CD8-positive, alpha-beta T cell (primary cell): ENCODE measurements at regions of chr2 and their contacts with region 1.

Region 1: GRCh38 chr2:70301344-70302194 is at the start of gene FAM136A:
- DNase-seq: peak; percentile 78 to 93 (median 88)
- ATAC-seq: peak; percentile 93
- H3K4me3 ChIP-seq: peak within 1 kb of the TSS; percentile 85 to 94
- H3K4me3 Mint-ChIP-seq: peak within 1 kb of the TSS; percentile 89
- H3K27ac ChIP-seq: peak within 1 kb of the TSS; percentile 77 to 80
- H3K27ac Mint-ChIP-seq: peak within 1 kb of the TSS; percentile 93
- H3K4me1 ChIP-seq: peaks cover 16% of the 10 kb centered on the region
- H3K4me1 Mint-ChIP-seq: peaks cover 29% of the 10 kb centered on the region
- H3K27me3 ChIP-seq: no peaks in the 10 kb centered on the region
- H3K27me3 Mint-ChIP-seq: no peaks in the 10 kb centered on the region
- CTCF ChIP-seq: peak; percentile 87
- total RNA-seq, gene FAM136A: 30.8 to 30.9 TPM

Region 2: DNA sequence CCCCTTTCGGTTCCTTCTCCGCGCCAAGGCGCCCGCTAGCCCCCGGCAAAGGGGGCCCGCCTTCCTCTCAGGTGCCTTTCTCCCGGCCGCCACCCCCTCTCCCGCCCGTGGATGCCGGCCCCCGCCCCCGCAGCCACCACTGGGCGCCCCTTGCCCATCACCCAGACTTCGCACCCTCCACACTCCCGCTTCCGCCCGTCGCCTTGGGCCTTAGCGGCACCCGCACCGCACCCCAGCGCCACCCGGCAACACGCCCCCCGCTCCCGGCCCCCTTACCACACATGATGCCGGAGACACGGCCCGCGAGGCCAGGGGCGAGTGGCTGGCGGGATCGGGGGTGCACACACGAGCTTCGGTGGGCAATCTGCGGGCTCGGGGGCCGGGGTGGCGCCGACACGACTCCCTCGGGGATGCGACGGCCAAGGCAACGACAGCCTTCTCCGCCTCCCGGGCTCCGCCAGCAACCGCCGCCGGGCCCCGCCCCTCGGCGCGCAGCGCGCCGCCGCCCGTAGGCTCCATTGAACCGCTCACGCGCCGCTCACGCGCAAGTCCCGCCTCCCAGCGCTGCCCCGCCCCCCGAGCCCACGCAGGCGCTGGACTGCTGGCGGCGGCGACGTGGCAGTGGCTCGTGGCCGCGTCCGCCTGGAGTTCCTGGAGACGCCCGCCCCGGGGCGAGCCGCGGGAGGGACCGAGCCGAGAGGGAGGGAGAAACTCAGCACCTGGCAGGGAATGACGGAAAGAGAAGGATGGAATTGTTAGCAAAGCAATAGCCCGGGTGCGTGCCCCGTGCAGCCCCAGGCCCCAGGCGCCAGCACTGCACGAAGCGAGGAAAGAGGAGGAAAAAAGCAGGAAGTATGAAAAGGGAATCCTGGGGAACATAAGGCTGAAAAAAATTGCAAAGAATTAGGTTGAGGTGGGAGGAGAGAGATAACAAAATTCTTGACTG is 914.5 kb before region 1 on chr2 and contains the start of gene GFPT1:
- CTCF ChIA-PET with region 1: no interaction called
- POLR2A ChIA-PET with region 1: no interaction called
- intact Hi-C with region 1: loop called in 1 of 2 experiments (anchors 5 kb)
- DNase-seq: peak; percentile 84 to 97 (median 93)
- ATAC-seq: peak; percentile 98
- H3K4me3 ChIP-seq: peak within 1 kb of the TSS; percentile 64 to 68
- H3K4me3 Mint-ChIP-seq: peak within 1 kb of the TSS; percentile 88
- H3K27ac ChIP-seq: peak within 1 kb of the TSS; percentile 65 to 70
- H3K27ac Mint-ChIP-seq: peak within 1 kb of the TSS; percentile 84
- H3K4me1 ChIP-seq: peaks cover 17% of the 10 kb centered on the region
- H3K4me1 Mint-ChIP-seq: peaks cover 45% of the 10 kb centered on the region
- H3K27me3 ChIP-seq: no peaks in the 10 kb centered on the region
- H3K27me3 Mint-ChIP-seq: no peaks in the 10 kb centered on the region
- CTCF ChIP-seq: no peak
- total RNA-seq, gene GFPT1: 26.5 to 30.9 TPM

Region 3: DNA sequence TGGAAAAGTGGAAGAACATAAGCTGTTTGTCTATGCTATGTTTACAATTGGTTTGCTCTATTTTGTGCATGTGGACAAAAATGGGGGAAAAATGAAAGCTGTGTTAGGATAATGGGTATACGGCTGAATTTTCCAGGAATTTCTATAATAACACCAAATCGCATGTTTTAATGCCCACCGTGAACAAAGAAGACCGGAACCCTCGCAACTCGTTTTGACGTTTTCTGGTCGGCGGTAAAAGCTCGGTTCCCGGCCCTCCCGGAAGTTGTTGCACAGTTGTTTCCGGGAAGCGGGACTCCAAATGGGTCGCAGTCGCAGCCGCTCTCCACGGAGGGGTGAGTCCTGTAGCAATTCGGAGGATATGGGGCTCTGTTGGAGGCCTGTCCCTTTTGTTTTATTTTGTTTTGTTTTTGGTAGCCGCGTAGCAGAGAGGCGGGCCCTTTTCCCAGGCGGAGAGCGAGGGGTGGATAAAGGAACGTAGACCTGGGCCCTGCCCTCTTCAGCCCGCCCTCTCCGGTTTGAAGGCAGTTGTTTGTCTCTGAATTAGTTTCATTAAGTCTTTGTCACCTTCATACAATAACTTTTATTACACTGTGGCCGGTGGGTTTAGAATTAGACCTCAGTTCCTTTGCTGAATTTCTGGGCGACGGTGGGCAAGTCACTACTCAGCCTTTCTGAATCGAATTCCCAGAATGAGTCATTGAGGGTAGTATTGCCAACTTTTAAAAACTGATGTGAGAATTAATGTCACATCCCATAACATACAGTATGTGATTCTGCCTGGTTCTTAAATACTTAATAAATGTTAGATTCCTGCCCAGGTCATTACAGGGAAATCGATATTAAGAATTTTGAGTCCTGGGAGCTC is 407.7 kb before region 1 on chr2 and contains the start of gene SNRNP27:
- CTCF ChIA-PET with region 1: interaction called, 5 read pairs
- POLR2A ChIA-PET with region 1: no interaction called
- intact Hi-C with region 1: loop called in 1 of 2 experiments (anchors 5 kb)
- DNase-seq: peak; percentile 71 to 89 (median 83)
- ATAC-seq: peak; percentile 92
- H3K4me3 ChIP-seq: peak within 1 kb of the TSS; percentile 85 to 88
- H3K4me3 Mint-ChIP-seq: peak within 1 kb of the TSS; percentile 99
- H3K27ac ChIP-seq: peak within 1 kb of the TSS; percentile 82 to 86
- H3K27ac Mint-ChIP-seq: peak within 1 kb of the TSS; percentile 99
- H3K4me1 ChIP-seq: peaks cover 13% of the 10 kb centered on the region
- H3K4me1 Mint-ChIP-seq: peaks cover 46% of the 10 kb centered on the region
- H3K27me3 ChIP-seq: no peaks in the 10 kb centered on the region
- H3K27me3 Mint-ChIP-seq: no peaks in the 10 kb centered on the region
- CTCF ChIP-seq: no peak
- total RNA-seq, gene SNRNP27: 47.9 to 58.5 TPM

Region 4: GRCh38 chr2:70024284-70024994 is 277.1 kb before region 1 on chr2:
- CTCF ChIA-PET with region 1: no interaction called
- POLR2A ChIA-PET with region 1: no interaction called
- intact Hi-C with region 1: no loop called
- DNase-seq: peak in 1 of 9 experiments; percentile 15
- ATAC-seq: no peak
- H3K4me3 ChIP-seq: no peak overlapping the region
- H3K4me3 Mint-ChIP-seq: no peak overlapping the region
- H3K27ac ChIP-seq: no peak overlapping the region
- H3K27ac Mint-ChIP-seq: no peak overlapping the region
- H3K4me1 ChIP-seq: no peaks in the 10 kb centered on the region
- H3K4me1 Mint-ChIP-seq: no peaks in the 10 kb centered on the region
- H3K27me3 ChIP-seq: no peaks in the 10 kb centered on the region
- H3K27me3 Mint-ChIP-seq: no peaks in the 10 kb centered on the region
- CTCF ChIP-seq: no peak

Region 5: DNA sequence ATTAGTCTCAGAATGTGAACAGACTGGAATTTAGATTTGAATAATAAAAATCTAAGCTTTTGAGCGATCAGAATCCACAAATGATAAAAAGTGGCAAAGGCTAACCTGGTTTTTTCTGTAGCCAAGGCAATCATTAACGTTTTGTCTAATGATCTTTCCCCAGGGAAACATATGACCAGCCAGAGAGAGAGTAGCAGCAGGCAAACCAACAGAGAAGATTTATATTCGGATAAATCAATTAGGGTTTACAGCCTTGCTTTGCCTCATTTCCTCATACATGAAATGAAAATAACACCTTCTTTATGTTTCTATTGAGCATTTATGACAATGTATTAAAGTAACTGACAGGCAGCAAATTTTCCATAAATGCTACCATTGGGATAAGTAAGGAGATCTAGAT is 67.6 kb before region 1 on chr2:
- CTCF ChIA-PET with region 1: no interaction called
- POLR2A ChIA-PET with region 1: no interaction called
- intact Hi-C with region 1: no loop called
- DNase-seq: no peak
- ATAC-seq: no peak
- H3K4me3 ChIP-seq: no peak overlapping the region
- H3K4me3 Mint-ChIP-seq: no peak overlapping the region
- H3K27ac ChIP-seq: no peak overlapping the region
- H3K27ac Mint-ChIP-seq: no peak overlapping the region
- H3K4me1 ChIP-seq: no peaks in the 10 kb centered on the region
- H3K4me1 Mint-ChIP-seq: peaks cover 3% of the 10 kb centered on the region
- H3K27me3 ChIP-seq: no peaks in the 10 kb centered on the region
- H3K27me3 Mint-ChIP-seq: no peaks in the 10 kb centered on the region
- CTCF ChIP-seq: no peak

Region 6: GRCh38 chr2:70248181-70248847 is 53.3 kb before region 1 on chr2 and contains the start of gene TIA1:
- CTCF ChIA-PET with region 1: interaction called, 5 read pairs
- POLR2A ChIA-PET with region 1: no interaction called
- intact Hi-C with region 1: loop called in 1 of 2 experiments (anchors 1 kb)
- DNase-seq: peak; percentile 96 to 100 (median 98)
- ATAC-seq: peak; percentile 98
- H3K4me3 ChIP-seq: peak within 1 kb of the TSS; percentile 86 to 90
- H3K4me3 Mint-ChIP-seq: peak within 1 kb of the TSS; percentile 97
- H3K27ac ChIP-seq: peak within 1 kb of the TSS; percentile 86 to 92
- H3K27ac Mint-ChIP-seq: peak within 1 kb of the TSS; percentile 98
- H3K4me1 ChIP-seq: peaks cover 30% of the 10 kb centered on the region
- H3K4me1 Mint-ChIP-seq: peaks cover 37% of the 10 kb centered on the region
- H3K27me3 ChIP-seq: no peaks in the 10 kb centered on the region
- H3K27me3 Mint-ChIP-seq: no peaks in the 10 kb centered on the region
- CTCF ChIP-seq: no peak
- total RNA-seq, gene TIA1: 55.9 to 62.6 TPM

Region 7: DNA sequence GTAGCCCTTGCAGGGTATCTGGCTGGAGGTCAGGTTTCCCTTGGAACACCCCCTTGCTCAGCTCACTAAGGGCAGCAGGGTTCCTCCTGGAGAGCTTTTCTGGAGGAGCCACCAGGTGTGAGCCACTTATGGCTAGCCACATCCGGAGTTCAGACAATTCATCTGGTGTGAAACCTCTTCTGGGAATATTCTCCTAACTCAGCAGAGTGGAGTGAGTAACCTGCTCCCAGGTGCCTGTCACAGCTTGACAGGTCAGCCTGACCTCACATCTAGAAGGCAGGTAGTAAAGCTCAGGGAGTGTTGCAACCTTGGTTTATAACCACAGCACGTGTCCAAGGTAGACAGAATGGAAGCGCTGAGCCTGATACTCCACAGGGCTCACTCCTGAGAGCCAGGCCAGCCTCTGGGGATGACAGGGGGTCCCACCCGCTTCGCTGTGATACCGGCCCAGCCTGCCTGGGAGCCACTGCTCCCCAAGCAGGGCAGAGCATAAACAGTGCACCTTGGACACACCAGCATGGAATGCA is 314.7 kb after region 1 on chr2:
- CTCF ChIA-PET with region 1: interaction called, 116 read pairs
- POLR2A ChIA-PET with region 1: no interaction called
- intact Hi-C with region 1: loop called in 1 of 2 experiments (anchors 1 kb)
- DNase-seq: no peak
- ATAC-seq: no peak
- H3K4me3 ChIP-seq: no peak overlapping the region
- H3K4me3 Mint-ChIP-seq: no peak overlapping the region
- H3K27ac ChIP-seq: no peak overlapping the region
- H3K27ac Mint-ChIP-seq: no peak overlapping the region
- H3K4me1 ChIP-seq: no peaks in the 10 kb centered on the region
- H3K4me1 Mint-ChIP-seq: no peaks in the 10 kb centered on the region
- H3K27me3 ChIP-seq: no peaks in the 10 kb centered on the region
- H3K27me3 Mint-ChIP-seq: peaks cover 6% of the 10 kb centered on the region
- CTCF ChIP-seq: no peak

Region 8: GRCh38 chr2:70789304-70790135 is 488.0 kb after region 1 on chr2:
- CTCF ChIA-PET with region 1: no interaction called
- POLR2A ChIA-PET with region 1: no interaction called
- intact Hi-C with region 1: loop called (anchors 5 to 10 kb)
- DNase-seq: peak; percentile 30 to 78 (median 67)
- ATAC-seq: peak; percentile 73
- H3K4me3 ChIP-seq: peak overlapping the region; percentile 32 to 36
- H3K4me3 Mint-ChIP-seq: peak overlapping the region; percentile 82
- H3K27ac ChIP-seq: no peak overlapping the region
- H3K27ac Mint-ChIP-seq: no peak overlapping the region
- H3K4me1 ChIP-seq: peaks cover 8% of the 10 kb centered on the region
- H3K4me1 Mint-ChIP-seq: peaks cover 13% of the 10 kb centered on the region
- H3K27me3 ChIP-seq: peaks cover 7 to 11% of the 10 kb centered on the region in 2 experiments
- H3K27me3 Mint-ChIP-seq: peaks cover 51% of the 10 kb centered on the region
- CTCF ChIP-seq: peak; percentile 54

Region 9: GRCh38 chr2:70994756-70995729 is 693.5 kb after region 1 on chr2 and contains the start of gene TEX261:
- CTCF ChIA-PET with region 1: no interaction called
- POLR2A ChIA-PET with region 1: no interaction called
- intact Hi-C with region 1: loop called in 1 of 2 experiments (anchors 5 kb)
- DNase-seq: peak; percentile 82 to 94 (median 89)
- ATAC-seq: peak; percentile 95
- H3K4me3 ChIP-seq: peak within 1 kb of the TSS; percentile 82 to 95
- H3K4me3 Mint-ChIP-seq: peak within 1 kb of the TSS; percentile 97
- H3K27ac ChIP-seq: peak within 1 kb of the TSS; percentile 69 to 74
- H3K27ac Mint-ChIP-seq: peak within 1 kb of the TSS; percentile 96
- H3K4me1 ChIP-seq: peaks cover 21% of the 10 kb centered on the region
- H3K4me1 Mint-ChIP-seq: peaks cover 34% of the 10 kb centered on the region
- H3K27me3 ChIP-seq: no peaks in the 10 kb centered on the region
- H3K27me3 Mint-ChIP-seq: no peaks in the 10 kb centered on the region
- CTCF ChIP-seq: peak; percentile 49
- total RNA-seq, gene TEX261: 23.1 to 28.1 TPM